ENCODE measurements at regions of chr9 and their contacts with region 1.

Region 1: GRCh38 chr9:131366761-131367401 is 27.0 kb upstream of the PRRC2B start:
- DNase-seq: peak; percentile 64
- ATAC-seq: peak; percentile 98
- H3K4me3 ChIP-seq: peak overlapping the region in 1 of 3 experiments; percentile 18; a peak in 2 of 6 replicates
- H3K27ac ChIP-seq: no peak overlapping the region
- H3K4me1 ChIP-seq: peaks cover 14% of the 10 kb centered on the region
- H3K27me3 ChIP-seq: no peaks in the 10 kb centered on the region
- CTCF ChIP-seq: peak; percentile 87
- EP300 ChIP-seq: no peak
- POLR2A ChIP-seq: no peak
- RAD21 ChIP-seq: peak; percentile 73

Region 2: GRCh38 chr9:131270171-131271015 is 96.5 kb before region 1 on chr9:
- CTCF ChIA-PET with region 1: no interaction called
- POLR2A ChIA-PET with region 1: no interaction called
- in situ Hi-C with region 1: no loop called
- intact Hi-C with region 1: no loop called
- DNase-seq: no peak
- ATAC-seq: no peak
- H3K4me3 ChIP-seq: no peak overlapping the region
- H3K27ac ChIP-seq: no peak overlapping the region
- H3K4me1 ChIP-seq: peaks cover 75% of the 10 kb centered on the region
- H3K27me3 ChIP-seq: peaks cover 12 to 32% of the 10 kb centered on the region in 2 experiments
- CTCF ChIP-seq: no peak
- EP300 ChIP-seq: no peak
- POLR2A ChIP-seq: no peak
- RAD21 ChIP-seq: no peak

Region 3: GRCh38 chr9:131402738-131403492 is 36.0 kb after region 1 on chr9:
- CTCF ChIA-PET with region 1: no interaction called
- POLR2A ChIA-PET with region 1: interaction called, 14 read pairs
- in situ Hi-C with region 1: no loop called
- intact Hi-C with region 1: no loop called
- DNase-seq: peak; percentile 93
- ATAC-seq: peak; percentile 90
- H3K4me3 ChIP-seq: peak overlapping the region in 2 of 3 experiments; percentile 25 to 57; a peak in 3 of 6 replicates
- H3K27ac ChIP-seq: peak overlapping the region; percentile 70
- H3K4me1 ChIP-seq: peaks cover 93% of the 10 kb centered on the region
- H3K27me3 ChIP-seq: no peaks in the 10 kb centered on the region
- CTCF ChIP-seq: 0 out of 2 replicates have a peak, but pooled peaks have one; percentile 20
- EP300 ChIP-seq: peak; percentile 44 to 51; a peak in 2 of 4 replicates
- POLR2A ChIP-seq: peak; percentile 18 to 61; a peak in 2 of 4 replicates
- RAD21 ChIP-seq: no peak; the same call in 1 of the 2 replicates

Region 4: GRCh38 chr9:131478421-131478868 is 111.6 kb after region 1 on chr9:
- CTCF ChIA-PET with region 1: no interaction called
- POLR2A ChIA-PET with region 1: interaction called, 3 read pairs
- in situ Hi-C with region 1: loop called (anchors 5 kb)
- intact Hi-C with region 1: loop called (anchors 1 kb)
- DNase-seq: peak; percentile 46
- ATAC-seq: peak; percentile 59
- H3K4me3 ChIP-seq: no peak overlapping the region
- H3K27ac ChIP-seq: no peak overlapping the region
- H3K4me1 ChIP-seq: peaks cover 3% of the 10 kb centered on the region; the same call in 1 of the 2 replicates
- H3K27me3 ChIP-seq: no peaks in the 10 kb centered on the region
- CTCF ChIP-seq: peak; percentile 60
- EP300 ChIP-seq: no peak
- POLR2A ChIP-seq: no peak
- RAD21 ChIP-seq: no peak